A673 (cell line): ENCODE measurements at regions of chr4 and their contacts with region 1.

Region 1: GRCh38 chr4:48904101-48904500 is 2.5 kb downstream of the OCIAD2 start:
- DNase-seq: no peak
- H3K4me3 ChIP-seq: no peak overlapping the region
- H3K27ac ChIP-seq: no peak overlapping the region
- H3K4me1 ChIP-seq: peaks cover 56% of the 10 kb centered on the region
- H3K27me3 ChIP-seq: no peaks in the 10 kb centered on the region
- CTCF ChIP-seq: no peak

Region 2: GRCh38 chr4:48944756-48945241 is 40.7 kb after region 1 on chr4:
- CTCF ChIA-PET with region 1: interaction called, 13 read pairs
- POLR2A ChIA-PET with region 1: no interaction called
- intact Hi-C with region 1: no loop called
- DNase-seq: peak; percentile 32
- H3K4me3 ChIP-seq: no peak overlapping the region
- H3K27ac ChIP-seq: no peak overlapping the region
- H3K4me1 ChIP-seq: no peaks in the 10 kb centered on the region
- H3K27me3 ChIP-seq: no peaks in the 10 kb centered on the region
- CTCF ChIP-seq: peak; percentile 74